ENCODE measurements at regions of chr13 and their contacts with region 1.

Region 1: GRCh38 chr13:24671386-24672107 is 8.7 kb upstream of the ATP12A start:
- DNase-seq: peak; percentile 79
- H3K4me3 ChIP-seq: no peak overlapping the region
- H3K27ac ChIP-seq: no peak overlapping the region
- H3K4me1 ChIP-seq: no peaks in the 10 kb centered on the region
- H3K27me3 ChIP-seq: no peaks in the 10 kb centered on the region
- CTCF ChIP-seq: peak; percentile 73

Region 2: GRCh38 chr13:24683838-24684599 is 12.5 kb after region 1 on chr13:
- CTCF ChIA-PET with region 1: no interaction called
- POLR2A ChIA-PET with region 1: interaction called, 13 read pairs
- intact Hi-C with region 1: no loop called
- DNase-seq: peak; percentile 79
- H3K4me3 ChIP-seq: no peak overlapping the region
- H3K27ac ChIP-seq: peak overlapping the region; percentile 23
- H3K4me1 ChIP-seq: peaks cover 17% of the 10 kb centered on the region
- H3K27me3 ChIP-seq: peaks cover 17% of the 10 kb centered on the region
- CTCF ChIP-seq: peak; percentile 89

Region 3: GRCh38 chr13:25771639-25772471 is 1100.3 kb after region 1 on chr13:
- CTCF ChIA-PET with region 1: interaction called, 12 read pairs
- POLR2A ChIA-PET with region 1: no interaction called
- intact Hi-C with region 1: no loop called
- DNase-seq: peak; percentile 72
- H3K4me3 ChIP-seq: no peak overlapping the region
- H3K27ac ChIP-seq: no peak overlapping the region
- H3K4me1 ChIP-seq: peaks cover 24% of the 10 kb centered on the region
- H3K27me3 ChIP-seq: no peaks in the 10 kb centered on the region
- CTCF ChIP-seq: no peak